Mammary epithelial cell (primary cell): ENCODE measurements at regions of chr7 and their contacts with region 1.

Region 1: DNA sequence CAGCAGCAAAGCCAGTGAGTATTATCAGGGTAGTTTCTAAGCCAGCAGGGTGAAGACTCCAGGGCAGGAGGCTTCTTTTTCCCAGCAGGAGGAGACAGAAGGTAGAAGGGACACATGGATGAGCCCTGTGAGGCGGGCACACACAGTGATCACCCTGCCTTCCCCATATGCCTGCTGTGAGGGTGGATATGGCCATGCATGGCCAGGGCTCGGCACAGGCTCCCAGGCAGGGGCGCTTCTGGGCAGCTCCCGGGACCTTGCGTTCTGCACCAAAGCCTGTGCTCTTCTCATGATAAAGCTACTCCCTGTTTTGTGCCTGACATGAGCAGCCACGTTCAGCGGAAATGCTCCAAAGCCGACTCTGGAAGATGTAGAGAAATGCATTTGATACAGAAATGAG is 807.2 kb downstream of the TYW1 start:
- DNase-seq: no peak
- H3K4me3 ChIP-seq: no peak overlapping the region
- H3K27ac ChIP-seq: no peak overlapping the region
- H3K4me1 ChIP-seq: no peaks in the 10 kb centered on the region
- H3K27me3 ChIP-seq: no peaks in the 10 kb centered on the region
- CTCF ChIP-seq: no peak

Region 2: GRCh38 chr7:66697449-66698438 is 1106.0 kb before region 1 on chr7:
- CTCF ChIA-PET with region 1: no interaction called
- dilution Hi-C with region 1: no loop called
- in situ Hi-C with region 1: no loop called
- intact Hi-C with region 1: no loop called
- DNase-seq: peak; percentile 22
- H3K4me3 ChIP-seq: no peak overlapping the region
- H3K27ac ChIP-seq: no peak overlapping the region
- H3K4me1 ChIP-seq: peaks cover 8% of the 10 kb centered on the region
- H3K27me3 ChIP-seq: no peaks in the 10 kb centered on the region
- CTCF ChIP-seq: no peak

Region 3: DNA sequence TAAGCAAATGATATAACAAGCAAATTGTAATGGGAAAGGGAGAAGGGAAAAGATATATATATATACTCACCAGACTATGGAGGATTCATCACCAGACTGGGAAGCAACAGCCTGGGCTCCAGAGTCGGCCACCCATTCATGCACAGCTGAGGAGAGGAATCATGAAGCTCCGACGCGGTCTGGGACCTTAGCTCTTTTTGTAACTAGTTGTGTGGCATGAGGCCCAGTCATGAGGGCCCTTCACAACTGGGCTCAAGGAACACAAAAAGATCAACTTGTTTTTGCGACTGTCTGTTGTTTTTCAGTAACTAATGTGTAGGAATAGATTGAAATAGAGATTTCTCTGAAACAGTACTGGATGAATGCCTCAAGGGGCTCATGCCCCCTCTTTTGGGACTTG is 104.0 kb after region 1 on chr7:
- CTCF ChIA-PET with region 1: no interaction called
- dilution Hi-C with region 1: loop called (anchors 5 kb)
- in situ Hi-C with region 1: no loop called
- intact Hi-C with region 1: no loop called
- DNase-seq: no peak
- H3K4me3 ChIP-seq: no peak overlapping the region
- H3K27ac ChIP-seq: no peak overlapping the region
- H3K4me1 ChIP-seq: no peaks in the 10 kb centered on the region
- H3K27me3 ChIP-seq: no peaks in the 10 kb centered on the region
- CTCF ChIP-seq: no peak